ENCODE measurements at regions of chr13 and their contacts with region 1.

Region 1: GRCh38 chr13:72823724-72824123 is 41.8 kb downstream of the PIBF1 start:
- DNase-seq: no peak
- ATAC-seq: no peak
- H3K4me3 ChIP-seq: no peak overlapping the region
- H3K27ac ChIP-seq: no peak overlapping the region
- H3K4me1 ChIP-seq: no peaks in the 10 kb centered on the region
- H3K27me3 ChIP-seq: no peaks in the 10 kb centered on the region
- CTCF ChIP-seq: no peak
- POLR2A ChIP-seq: no peak
- RAD21 ChIP-seq: no peak

Region 2: GRCh38 chr13:73069206-73069805 is 245.6 kb after region 1 on chr13:
- CTCF ChIA-PET with region 1: no interaction called
- POLR2A ChIA-PET with region 1: interaction called, 15 read pairs
- dilution Hi-C with region 1: no loop called
- in situ Hi-C with region 1: no loop called
- intact Hi-C with region 1: no loop called
- DNase-seq: peak; percentile 60
- ATAC-seq: peak; percentile 53; the same call in 1 of the 2 replicates
- H3K4me3 ChIP-seq: no peak overlapping the region
- H3K27ac ChIP-seq: no peak overlapping the region
- H3K4me1 ChIP-seq: peaks cover 11% of the 10 kb centered on the region
- H3K27me3 ChIP-seq: no peaks in the 10 kb centered on the region
- CTCF ChIP-seq: no peak
- POLR2A ChIP-seq: no peak
- RAD21 ChIP-seq: no peak

Measured in IMR-90 (cell line).